ENCODE measurements at regions of chr10 and their contacts with region 1.

Region 1: DNA sequence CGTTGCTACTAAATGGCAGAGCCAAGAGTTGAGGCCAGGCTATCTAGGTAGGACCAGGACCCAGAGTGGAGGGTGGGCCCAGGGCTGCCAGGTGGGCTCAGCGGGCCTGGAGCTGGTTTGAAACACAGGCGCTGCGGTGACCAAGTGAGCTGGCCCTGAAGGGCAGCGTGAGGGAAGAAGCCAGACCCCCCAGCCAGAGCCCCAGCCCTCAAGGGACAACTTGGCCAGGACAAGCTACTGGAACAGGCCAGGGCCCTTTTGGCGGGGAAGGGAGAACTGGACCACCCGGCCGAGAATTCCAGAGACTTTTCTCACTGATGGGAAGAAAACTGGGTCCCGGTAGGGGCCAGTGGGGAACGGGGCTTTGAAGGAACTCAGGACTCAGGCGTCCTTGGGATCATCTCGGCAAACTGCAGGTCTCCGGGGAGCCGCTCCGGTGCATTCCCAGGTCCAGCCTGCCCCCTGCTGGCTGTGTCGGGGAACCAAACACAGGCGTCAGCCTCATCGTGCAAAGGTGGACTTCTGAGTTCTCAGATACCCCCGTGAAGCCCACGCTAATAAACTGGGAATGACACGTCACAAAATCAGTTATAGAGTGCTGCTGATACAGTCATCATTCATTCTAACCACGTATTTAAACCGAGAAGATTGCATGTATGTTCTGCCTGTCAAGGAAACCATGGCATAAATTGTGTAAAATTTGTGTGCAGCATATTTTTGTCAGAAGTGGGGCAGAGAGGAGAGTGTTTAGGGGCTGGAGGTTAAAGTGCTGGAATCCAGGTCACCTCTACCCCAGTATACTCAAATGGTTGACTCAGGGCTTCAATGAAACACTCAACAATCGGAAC is 76.0 kb upstream of the CPXM2 start:
- DNase-seq: peak; percentile 54 to 62
- ATAC-seq: peak; percentile 48 to 78 (median 54)
- H3K4me3 ChIP-seq: no peak overlapping the region
- H3K4me3 Mint-ChIP-seq: no peak overlapping the region
- H3K27ac ChIP-seq: no peak overlapping the region
- H3K27ac Mint-ChIP-seq: no peak overlapping the region
- H3K4me1 ChIP-seq: no peaks in the 10 kb centered on the region
- H3K4me1 Mint-ChIP-seq: no peaks in the 10 kb centered on the region
- H3K27me3 ChIP-seq: peaks cover 7% of the 10 kb centered on the region
- H3K27me3 Mint-ChIP-seq: peaks cover 50 to 61% of the 10 kb centered on the region in 2 donors
- CTCF ChIP-seq: peak; percentile 86

Region 2: GRCh38 chr10:123132576-123133477 is 834.8 kb before region 1 on chr10:
- intact Hi-C with region 1: loop called (anchors 10 kb)
- DNase-seq: peak; percentile 73 to 92
- ATAC-seq: peak; percentile 74 to 81 (median 78)
- H3K4me3 ChIP-seq: no peak overlapping the region
- H3K4me3 Mint-ChIP-seq: peak overlapping the region; percentile 64
- H3K27ac ChIP-seq: no peak overlapping the region
- H3K27ac Mint-ChIP-seq: peak overlapping the region in 1 of 2 donors; percentile 53
- H3K4me1 ChIP-seq: peaks cover 40% of the 10 kb centered on the region
- H3K4me1 Mint-ChIP-seq: peaks cover 20 to 28% of the 10 kb centered on the region in 2 donors
- H3K27me3 ChIP-seq: peaks cover 54% of the 10 kb centered on the region
- H3K27me3 Mint-ChIP-seq: peaks cover 50 to 73% of the 10 kb centered on the region in 2 donors
- CTCF ChIP-seq: peak; percentile 84

Region 3: DNA sequence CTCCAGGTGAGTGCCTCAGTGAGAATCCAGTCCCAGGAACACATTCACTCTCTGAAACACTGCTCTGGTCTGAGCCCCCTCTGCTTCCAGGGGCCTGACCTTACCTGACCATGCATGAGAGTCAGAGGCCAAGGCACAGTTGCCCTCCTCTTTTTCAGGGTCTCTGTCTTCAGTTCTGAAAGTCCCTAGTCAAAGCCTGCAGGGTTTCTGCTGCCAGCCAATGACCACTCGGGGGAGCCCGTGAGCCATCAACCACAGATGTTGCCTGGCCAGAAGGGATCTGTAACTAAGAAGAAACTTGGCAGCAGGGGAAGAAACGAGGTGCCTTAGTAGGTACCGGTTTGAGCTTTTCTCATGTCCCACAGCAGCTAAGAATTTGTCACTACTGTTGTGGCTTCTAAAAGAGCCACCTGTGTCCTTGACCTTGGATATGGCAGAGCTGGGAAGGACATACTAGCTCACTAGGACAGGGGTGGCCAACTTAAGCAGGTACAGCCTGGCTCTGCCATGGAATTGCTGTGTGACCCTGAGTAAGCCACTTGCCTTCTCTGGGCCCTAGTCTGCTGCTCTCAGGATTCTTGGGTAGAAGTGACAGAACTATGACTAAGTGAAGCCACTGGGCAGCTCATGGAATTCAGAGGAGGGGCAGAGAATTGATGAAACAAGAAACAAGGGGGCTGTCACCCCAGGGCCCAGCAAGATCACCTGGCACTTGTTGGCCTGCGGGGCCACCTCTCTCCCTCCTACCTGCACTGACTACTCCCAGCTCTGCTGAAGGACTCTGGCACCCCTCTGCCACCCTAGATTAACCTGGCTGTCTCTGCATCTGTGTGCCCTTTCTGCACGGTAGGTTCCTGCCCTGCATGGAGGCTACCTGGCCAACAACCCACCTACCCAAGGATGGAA is 385.3 kb before region 1 on chr10:
- intact Hi-C with region 1: loop called (anchors 1 kb)
- DNase-seq: peak; percentile 69 to 71
- ATAC-seq: peak; percentile 65 to 85 (median 67)
- H3K4me3 ChIP-seq: no peak overlapping the region
- H3K4me3 Mint-ChIP-seq: no peak overlapping the region
- H3K27ac ChIP-seq: no peak overlapping the region
- H3K27ac Mint-ChIP-seq: no peak overlapping the region
- H3K4me1 ChIP-seq: no peaks in the 10 kb centered on the region
- H3K4me1 Mint-ChIP-seq: no peaks in the 10 kb centered on the region
- H3K27me3 ChIP-seq: peaks cover 10% of the 10 kb centered on the region
- H3K27me3 Mint-ChIP-seq: peaks cover 25 to 50% of the 10 kb centered on the region in 2 donors
- CTCF ChIP-seq: peak; percentile 67

Region 4: DNA sequence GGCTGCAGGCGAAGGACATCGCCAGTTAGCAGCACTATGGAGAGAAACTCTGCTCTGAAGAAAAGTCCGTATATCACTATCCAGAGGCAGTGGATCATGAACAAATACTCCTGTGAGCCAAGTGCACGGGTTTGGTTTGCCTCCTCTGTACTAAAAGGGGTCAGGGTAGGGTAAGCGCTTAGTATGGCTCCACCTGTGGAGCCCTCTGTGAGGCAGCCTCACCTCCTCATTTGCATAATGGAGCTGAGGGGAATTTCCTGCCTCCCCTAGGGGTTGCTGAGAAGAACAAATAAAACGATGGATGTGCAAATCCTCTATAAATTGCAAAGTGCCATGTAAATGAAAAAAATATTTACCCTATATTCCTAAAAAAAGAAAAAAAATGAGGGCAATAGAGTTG is 238.1 kb before region 1 on chr10:
- intact Hi-C with region 1: no loop called
- DNase-seq: no peak
- ATAC-seq: no peak
- H3K4me3 ChIP-seq: no peak overlapping the region
- H3K4me3 Mint-ChIP-seq: no peak overlapping the region
- H3K27ac ChIP-seq: no peak overlapping the region
- H3K27ac Mint-ChIP-seq: no peak overlapping the region
- H3K4me1 ChIP-seq: no peaks in the 10 kb centered on the region
- H3K4me1 Mint-ChIP-seq: no peaks in the 10 kb centered on the region
- H3K27me3 ChIP-seq: no peaks in the 10 kb centered on the region
- H3K27me3 Mint-ChIP-seq: no peaks in the 10 kb centered on the region
- CTCF ChIP-seq: no peak

Region 5: GRCh38 chr10:124049484-124049883 is 81.9 kb after region 1 on chr10:
- intact Hi-C with region 1: no loop called
- DNase-seq: no peak
- ATAC-seq: no peak
- H3K4me3 ChIP-seq: no peak overlapping the region
- H3K4me3 Mint-ChIP-seq: no peak overlapping the region
- H3K27ac ChIP-seq: no peak overlapping the region
- H3K27ac Mint-ChIP-seq: no peak overlapping the region
- H3K4me1 ChIP-seq: no peaks in the 10 kb centered on the region
- H3K4me1 Mint-ChIP-seq: no peaks in the 10 kb centered on the region
- H3K27me3 ChIP-seq: no peaks in the 10 kb centered on the region
- H3K27me3 Mint-ChIP-seq: peaks cover 7 to 8% of the 10 kb centered on the region in 2 donors
- CTCF ChIP-seq: no peak

Measured in natural killer cell (primary cell).